Panc1 (cell line): ENCODE measurements at regions of chr12 and their contacts with region 1.

Region 1: DNA sequence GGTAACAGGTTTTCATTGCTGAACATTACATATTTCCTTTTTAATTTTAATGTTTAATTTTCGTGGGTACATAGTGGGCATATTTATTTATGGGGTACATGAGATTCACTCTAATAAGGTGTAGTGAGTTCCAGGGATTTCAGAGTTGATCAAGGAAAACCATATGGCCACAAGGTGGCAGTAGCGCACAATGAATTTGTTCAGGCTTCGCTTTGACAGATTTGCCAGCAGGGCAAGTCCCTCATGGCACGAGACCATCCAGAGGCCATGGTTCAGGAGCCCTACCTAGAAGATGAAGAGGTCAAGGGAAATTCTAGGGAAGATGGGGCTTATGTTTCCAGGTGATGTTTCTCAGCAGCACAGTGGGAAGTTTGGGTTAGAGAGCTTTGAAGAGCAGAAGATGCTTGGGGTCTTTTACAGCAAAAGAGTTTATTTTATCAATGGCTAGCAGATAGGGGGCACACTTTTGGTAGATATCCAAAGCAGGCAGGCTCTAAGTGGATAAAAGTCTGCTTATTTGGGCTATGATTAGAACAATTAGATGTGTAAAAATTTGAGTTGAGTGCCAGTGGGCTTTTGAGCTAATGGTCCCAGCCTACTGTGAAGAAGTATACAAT is 1004.4 kb downstream of the AACS start:
- DNase-seq: no peak
- ATAC-seq: peak; percentile 63; the same call in 1 of the 2 replicates
- H3K4me3 ChIP-seq: no peak overlapping the region
- H3K27ac ChIP-seq: no peak overlapping the region
- H3K4me1 ChIP-seq: no peaks in the 10 kb centered on the region
- H3K27me3 ChIP-seq: no peaks in the 10 kb centered on the region
- CTCF ChIP-seq: peak; percentile 78

Region 2: DNA sequence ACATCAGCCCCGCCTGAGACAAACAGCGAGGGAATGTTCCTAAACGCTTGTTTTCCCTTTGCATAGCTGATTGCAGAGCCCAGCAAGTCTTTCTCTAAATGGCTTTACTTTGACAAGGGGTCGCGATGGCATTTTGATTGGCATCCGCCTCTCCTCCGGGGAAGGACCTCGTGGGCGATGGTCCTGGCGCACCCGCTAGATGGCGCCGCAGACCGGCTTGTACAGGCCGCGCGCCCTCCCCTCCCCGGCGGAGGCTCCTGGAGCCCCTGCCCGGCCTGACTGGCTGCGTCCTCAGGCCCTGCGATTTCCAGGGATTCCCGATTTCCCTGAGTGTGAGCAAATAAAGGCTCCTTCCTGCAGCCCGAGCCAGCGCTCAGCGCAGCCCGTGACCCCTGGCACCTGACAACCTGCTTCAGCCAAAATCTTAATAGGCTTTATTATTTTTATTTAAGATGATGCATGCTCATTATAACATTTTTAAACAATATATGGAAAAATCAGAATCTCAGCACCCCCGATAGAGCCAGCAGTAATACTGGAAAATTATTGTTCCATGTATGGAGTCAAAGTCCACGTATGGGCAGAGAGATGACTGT is 536.1 kb before region 1 on chr12:
- CTCF ChIA-PET with region 1: no interaction called
- POLR2A ChIA-PET with region 1: no interaction called
- in situ Hi-C with region 1: no loop called
- intact Hi-C with region 1: loop called (anchors 10 kb)
- DNase-seq: no peak
- ATAC-seq: peak; percentile 90
- H3K4me3 ChIP-seq: no peak overlapping the region
- H3K27ac ChIP-seq: no peak overlapping the region
- H3K4me1 ChIP-seq: no peaks in the 10 kb centered on the region
- H3K27me3 ChIP-seq: 0 out of 2 replicates have a peak, but pooled peaks cover 2% of the 10 kb centered on the region
- CTCF ChIP-seq: peak; percentile 92

Region 3: DNA sequence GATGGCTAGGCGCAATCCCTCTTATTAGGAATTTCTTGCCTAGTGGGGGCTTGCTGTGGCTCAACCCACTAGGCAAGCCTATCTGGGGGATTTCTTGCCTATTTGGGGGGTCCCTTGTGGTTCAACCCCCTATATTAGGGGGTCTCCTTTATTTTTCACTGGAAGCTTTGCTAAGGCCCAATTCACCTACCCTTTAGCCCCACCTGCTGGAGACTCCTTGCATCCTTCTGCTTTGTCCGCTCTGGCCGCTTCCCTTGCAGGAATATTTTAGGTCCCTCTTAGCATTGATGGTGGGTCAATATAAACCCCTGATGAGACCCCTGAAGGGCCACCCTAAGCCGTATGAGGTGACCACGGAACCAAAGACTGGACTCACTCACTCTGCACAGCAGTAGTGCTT is 547.7 kb after region 1 on chr12:
- CTCF ChIA-PET with region 1: no interaction called
- POLR2A ChIA-PET with region 1: no interaction called
- in situ Hi-C with region 1: no loop called
- intact Hi-C with region 1: loop called (anchors 10 kb)
- DNase-seq: no peak
- ATAC-seq: no peak
- H3K4me3 ChIP-seq: no peak overlapping the region
- H3K27ac ChIP-seq: no peak overlapping the region
- H3K4me1 ChIP-seq: no peaks in the 10 kb centered on the region
- H3K27me3 ChIP-seq: no peaks in the 10 kb centered on the region
- CTCF ChIP-seq: peak; percentile 72

Region 4: DNA sequence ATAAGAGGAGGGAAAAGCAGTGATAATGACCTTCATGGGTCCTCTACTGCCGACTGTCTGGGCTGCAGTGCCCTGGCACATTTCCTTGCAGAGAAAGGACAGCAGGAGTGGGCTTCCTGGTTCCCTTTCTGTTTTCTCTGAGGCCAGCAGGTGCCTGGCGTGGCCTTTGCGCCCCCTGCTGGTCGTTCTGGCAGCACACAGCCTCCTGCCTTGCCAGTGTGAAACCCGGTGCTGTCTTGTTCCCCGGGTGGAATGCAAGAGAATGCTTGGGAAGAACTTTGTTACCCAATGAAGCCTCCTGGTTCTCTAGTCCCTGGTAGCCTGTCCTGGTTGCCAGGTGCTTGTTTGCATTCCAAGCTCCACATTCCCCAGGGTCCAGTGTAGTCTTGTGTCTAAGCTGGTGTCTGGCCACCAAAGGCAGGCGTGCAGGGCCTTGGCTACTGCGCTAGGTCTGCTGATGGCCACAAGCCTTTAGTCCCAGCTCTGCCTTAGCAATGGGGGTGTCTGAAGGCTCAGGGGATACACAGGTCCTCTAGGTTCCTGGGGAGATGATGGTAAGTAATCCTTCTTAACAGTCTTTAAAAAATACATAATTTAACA is 804.9 kb after region 1 on chr12:
- CTCF ChIA-PET with region 1: no interaction called
- POLR2A ChIA-PET with region 1: no interaction called
- in situ Hi-C with region 1: no loop called
- intact Hi-C with region 1: loop called (anchors 10 kb)
- DNase-seq: peak; percentile 22
- ATAC-seq: peak; percentile 82
- H3K4me3 ChIP-seq: no peak overlapping the region
- H3K27ac ChIP-seq: no peak overlapping the region
- H3K4me1 ChIP-seq: no peaks in the 10 kb centered on the region
- H3K27me3 ChIP-seq: no peaks in the 10 kb centered on the region
- CTCF ChIP-seq: peak; percentile 91

Region 5: GRCh38 chr12:127381048-127381668 is 1311.5 kb after region 1 on chr12:
- CTCF ChIA-PET with region 1: no interaction called
- POLR2A ChIA-PET with region 1: no interaction called
- in situ Hi-C with region 1: no loop called
- intact Hi-C with region 1: loop called (anchors 5 kb)
- DNase-seq: no peak
- ATAC-seq: peak; percentile 92
- H3K4me3 ChIP-seq: peak overlapping the region in 1 of 2 experiments; percentile 19; a peak in 1 of 4 replicates
- H3K27ac ChIP-seq: no peak overlapping the region
- H3K4me1 ChIP-seq: no peaks in the 10 kb centered on the region
- H3K27me3 ChIP-seq: no peaks in the 10 kb centered on the region
- CTCF ChIP-seq: peak; percentile 93